GM18951 (cell line): ENCODE measurements at regions of chr3 and their contacts with region 1.

Region 1: DNA sequence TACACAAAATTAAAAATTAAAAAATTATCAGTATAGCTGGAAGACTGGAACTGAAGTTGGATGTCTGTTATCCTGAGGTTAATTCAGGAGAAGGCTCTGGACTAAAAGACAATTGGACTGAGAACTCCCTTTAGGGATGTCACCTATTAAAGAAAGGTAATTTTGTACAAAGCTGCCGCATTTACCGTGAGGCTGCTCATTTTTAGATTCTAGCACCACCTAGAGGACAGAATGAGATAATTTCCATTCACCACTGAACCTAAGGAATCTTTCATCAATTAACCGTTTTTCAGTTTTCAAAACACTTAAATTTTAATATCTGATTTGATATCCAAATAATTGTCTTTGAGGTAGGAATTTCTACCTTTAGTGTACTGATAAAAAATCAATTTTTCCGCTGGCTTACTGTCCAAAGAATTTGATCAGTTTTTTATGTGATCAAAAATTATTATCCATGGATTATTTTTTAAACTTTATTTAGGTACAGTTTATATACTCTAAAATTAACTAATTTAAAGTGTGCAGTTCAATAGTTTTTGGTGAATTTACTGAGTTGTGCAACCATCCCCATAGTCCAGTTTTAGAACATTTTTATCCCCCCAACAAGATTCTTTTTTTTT is 106.7 kb upstream of the TNIK start:
- POLR2A ChIP-seq: no peak

Region 2: DNA sequence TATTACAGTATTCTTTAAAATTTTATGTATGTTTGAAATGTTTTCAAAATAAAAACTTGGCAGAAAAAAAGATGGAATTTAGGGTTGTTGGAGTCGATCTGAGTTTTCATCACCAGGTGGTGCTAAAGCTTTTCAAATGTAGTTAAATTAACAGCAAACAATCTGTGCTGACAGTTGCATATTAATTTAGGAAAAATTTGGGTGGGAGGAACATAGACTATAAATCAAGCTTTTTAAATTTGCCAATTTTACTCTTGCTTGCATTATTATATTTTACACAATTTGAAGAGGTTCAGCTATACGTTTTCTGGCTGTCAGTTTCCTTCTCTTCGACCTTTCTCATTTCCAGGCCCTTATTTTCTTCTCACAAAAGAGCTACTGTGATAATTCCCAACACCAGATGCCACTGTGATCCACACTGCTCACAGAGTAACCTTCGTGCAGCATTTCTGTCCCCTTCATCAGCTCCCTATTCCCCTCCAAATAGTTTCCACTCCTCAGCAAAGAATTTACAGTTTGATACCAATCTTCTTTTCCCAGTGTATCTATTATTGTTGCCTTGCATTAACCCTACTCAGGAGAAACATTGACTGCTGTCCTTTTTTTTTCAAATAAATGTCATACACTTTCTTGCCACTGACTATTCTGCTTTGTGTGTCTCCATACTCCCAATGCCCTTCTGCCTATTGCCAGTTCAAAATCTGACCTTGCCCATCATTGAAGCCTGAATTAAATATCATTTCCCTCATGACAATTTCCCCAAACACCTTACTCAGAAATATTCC is 605.1 kb before region 1 on chr3:
- in situ Hi-C with region 1: loop called (anchors 10 kb)
- POLR2A ChIP-seq: no peak

Region 3: DNA sequence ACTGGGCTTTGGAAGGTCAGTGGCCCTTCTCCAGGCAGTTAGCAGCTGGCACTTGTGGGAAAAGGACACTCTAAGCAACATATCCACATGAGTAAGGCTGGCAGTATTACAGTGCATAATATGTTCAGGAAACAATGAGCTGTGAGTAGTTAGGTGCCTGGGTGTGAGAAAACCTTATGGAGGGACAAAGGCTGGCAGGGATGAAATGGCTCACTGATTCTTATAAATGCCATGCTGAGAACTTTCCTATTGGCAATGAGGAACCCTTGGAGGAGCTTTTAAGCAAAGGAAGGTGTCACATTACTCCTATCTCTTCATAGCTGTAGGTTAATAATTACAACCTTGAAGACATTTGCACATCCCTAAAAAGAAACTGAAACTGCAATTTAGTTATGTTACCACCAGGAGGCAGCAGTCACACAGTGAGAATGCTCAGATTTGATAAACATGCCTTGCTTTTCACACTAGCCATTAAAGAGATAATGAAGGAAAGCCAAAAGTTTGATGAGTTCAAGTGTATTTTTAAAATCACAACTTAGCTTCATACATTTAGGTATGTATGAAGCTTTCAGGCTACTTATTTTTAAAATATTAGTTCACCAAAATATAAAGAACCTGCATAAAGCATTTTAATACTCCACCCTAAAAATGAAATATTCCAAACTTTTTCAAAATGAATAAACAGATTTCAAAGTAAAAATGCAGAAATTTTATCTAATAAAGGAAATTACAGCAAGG is 403.8 kb before region 1 on chr3:
- in situ Hi-C with region 1: loop called (anchors 10 kb)
- POLR2A ChIP-seq: no peak

Region 4: GRCh38 chr3:171690281-171690680 is 123.4 kb after region 1 on chr3:
- in situ Hi-C with region 1: no loop called
- POLR2A ChIP-seq: no peak